ENCODE measurements at regions of chr3 and their contacts with region 1.

Region 1: DNA sequence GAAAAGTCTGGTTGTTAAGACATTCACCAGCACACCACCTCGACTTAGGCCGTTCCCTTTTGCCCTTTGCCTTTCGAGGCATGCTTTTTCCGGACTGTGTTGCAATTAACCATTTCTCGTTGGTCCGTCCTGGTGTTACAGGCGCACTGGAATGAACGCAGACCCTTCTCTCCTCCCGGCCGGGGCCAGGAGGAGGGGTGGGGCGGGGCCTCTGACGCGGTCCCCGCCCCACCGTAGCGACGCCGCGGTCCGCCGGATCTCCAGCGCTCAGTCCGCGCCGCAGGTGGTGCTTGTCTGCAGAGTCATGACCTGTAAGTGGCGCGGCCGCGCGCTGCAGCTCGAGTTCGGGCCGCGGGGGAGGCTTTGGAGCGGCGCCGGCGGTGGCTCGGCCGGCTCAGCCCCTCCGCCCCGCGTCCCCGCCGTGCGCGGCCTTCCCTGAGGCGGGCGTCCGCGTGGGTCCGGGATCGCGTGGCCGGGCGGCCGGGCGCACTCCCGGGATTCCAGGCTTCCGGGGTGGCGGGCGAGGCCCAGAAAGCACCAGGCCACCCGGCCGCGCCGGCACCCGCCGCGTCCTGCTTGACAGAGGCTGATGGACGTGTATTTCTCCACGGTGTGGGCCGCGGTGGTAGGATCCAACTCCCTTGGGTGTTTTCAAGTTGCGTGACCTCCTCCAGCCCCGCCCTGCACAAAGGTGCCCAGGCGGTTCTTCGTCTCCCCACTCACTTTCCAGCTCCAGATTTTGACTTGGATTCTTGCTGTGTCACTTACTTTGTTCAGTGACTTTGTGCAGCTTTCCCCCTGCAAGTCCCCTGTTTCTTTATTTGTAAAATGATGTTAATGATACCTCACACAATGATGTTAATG is at the start of gene NIT2:
- DNase-seq: peak; percentile 87
- H3K4me3 Mint-ChIP-seq: peak within 1 kb of the TSS; percentile 86
- H3K27ac Mint-ChIP-seq: peak within 1 kb of the TSS; percentile 84
- H3K4me1 Mint-ChIP-seq: peaks cover 21% of the 10 kb centered on the region
- H3K27me3 Mint-ChIP-seq: no peaks in the 10 kb centered on the region
- total RNA-seq, gene NIT2: 65.3 to 65.7 TPM

Region 2: GRCh38 chr3:100260685-100261484 is 73.8 kb before region 1 on chr3 and contains the start of gene TBC1D23:
- CTCF ChIA-PET with region 1: interaction called, 3 read pairs
- POLR2A ChIA-PET with region 1: interaction called, 3 read pairs
- intact Hi-C with region 1: loop called (anchors 1 kb)
- DNase-seq: peak; percentile 99
- H3K4me3 Mint-ChIP-seq: peak within 1 kb of the TSS; percentile 92
- H3K27ac Mint-ChIP-seq: peak within 1 kb of the TSS; percentile 85
- H3K4me1 Mint-ChIP-seq: peaks cover 52% of the 10 kb centered on the region
- H3K27me3 Mint-ChIP-seq: no peaks in the 10 kb centered on the region
- total RNA-seq, gene TBC1D23: 17.8 to 22.7 TPM

Region 3: GRCh38 chr3:100316641-100317069 is 18.1 kb before region 1 on chr3:
- CTCF ChIA-PET with region 1: interaction called, 3 read pairs
- POLR2A ChIA-PET with region 1: no interaction called
- intact Hi-C with region 1: loop called (anchors 2 kb)
- DNase-seq: peak; percentile 36
- H3K4me3 Mint-ChIP-seq: no peak overlapping the region
- H3K27ac Mint-ChIP-seq: no peak overlapping the region
- H3K4me1 Mint-ChIP-seq: peaks cover 8% of the 10 kb centered on the region
- H3K27me3 Mint-ChIP-seq: no peaks in the 10 kb centered on the region

Region 4: GRCh38 chr3:100492059-100493006 is 157.6 kb after region 1 on chr3 and contains the start of gene TMEM45A:
- CTCF ChIA-PET with region 1: no interaction called
- POLR2A ChIA-PET with region 1: no interaction called
- intact Hi-C with region 1: loop called (anchors 5 kb)
- DNase-seq: peak; percentile 90
- H3K4me3 Mint-ChIP-seq: peak within 1 kb of the TSS; percentile 82
- H3K27ac Mint-ChIP-seq: no peak within 1 kb of the TSS
- H3K4me1 Mint-ChIP-seq: peaks cover 9% of the 10 kb centered on the region
- H3K27me3 Mint-ChIP-seq: peaks cover 11% of the 10 kb centered on the region
- total RNA-seq, gene TMEM45A: 0.65 to 0.74 TPM

Region 5: GRCh38 chr3:101561630-101562328 is 1227.1 kb after region 1 on chr3 and contains the start of gene TRMT10C:
- CTCF ChIA-PET with region 1: no interaction called
- POLR2A ChIA-PET with region 1: no interaction called
- intact Hi-C with region 1: loop called (anchors 10 kb)
- DNase-seq: peak; percentile 96
- H3K4me3 Mint-ChIP-seq: peak within 1 kb of the TSS; percentile 97
- H3K27ac Mint-ChIP-seq: peak within 1 kb of the TSS; percentile 96
- H3K4me1 Mint-ChIP-seq: peaks cover 37% of the 10 kb centered on the region
- H3K27me3 Mint-ChIP-seq: peaks cover 3% of the 10 kb centered on the region
- total RNA-seq, gene TRMT10C: 39.5 to 43.2 TPM